Sigmoid colon (tissue), 7 donors: ENCODE measurements at regions of chr14 and their contacts with region 1.

Region 1: DNA sequence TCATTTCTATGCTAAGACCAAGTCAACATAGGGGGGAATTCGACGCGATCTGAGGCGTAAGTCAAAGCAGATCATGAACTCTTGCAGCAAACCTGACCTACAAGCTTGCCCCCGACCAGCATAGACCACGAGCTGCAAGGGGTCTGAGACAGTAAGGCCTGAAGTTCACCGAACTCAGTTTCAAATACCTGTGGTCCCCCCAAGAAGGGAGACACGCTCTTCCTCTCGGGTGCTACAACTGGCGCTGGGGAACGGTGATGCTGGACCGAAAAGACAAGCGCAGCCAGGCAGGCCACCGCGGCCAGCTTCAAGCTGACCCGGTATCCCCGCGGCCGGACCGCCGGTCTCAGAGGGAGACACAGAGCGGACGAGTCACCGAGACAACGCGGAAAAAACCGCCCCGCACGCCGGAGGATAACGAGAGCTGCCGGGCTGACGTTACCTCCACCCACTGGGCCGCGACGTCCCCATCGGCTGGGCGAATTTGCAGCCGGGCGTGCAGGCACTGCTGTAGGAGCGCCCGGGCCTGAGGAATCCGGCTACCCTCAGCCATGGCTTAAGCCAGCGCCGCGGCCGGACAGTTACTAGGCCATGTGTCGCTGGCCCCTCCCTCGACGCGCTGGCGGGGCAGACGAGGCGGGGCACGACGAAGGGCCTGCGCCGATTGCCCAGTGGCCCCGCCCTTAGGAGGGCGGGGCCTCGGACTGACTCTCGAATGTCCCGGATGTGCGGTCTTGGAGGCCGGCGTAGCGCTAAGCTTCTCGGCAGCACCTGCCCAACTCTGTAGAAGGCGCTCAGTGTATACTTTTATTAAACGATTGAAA is at the start of gene DTD2:
- DNase-seq: peak; percentile 97
- H3K4me3 ChIP-seq: peak within 1 kb of the TSS; percentile 68 to 80 (median 74)
- H3K27ac ChIP-seq: peak within 1 kb of the TSS; percentile 88 to 95 (median 94)
- H3K4me1 ChIP-seq: peaks cover 0 to 32% (median 16%) of the 10 kb centered on the region in 4 donors
- H3K27me3 ChIP-seq: no peaks in the 10 kb centered on the region
- CTCF ChIP-seq: no peak
- EP300 ChIP-seq: no peak
- POLR2A ChIP-seq: peak; percentile 51 to 63
- total RNA-seq, gene DTD2: 26.0 to 31.6 (median 27.6) TPM

Region 2: DNA sequence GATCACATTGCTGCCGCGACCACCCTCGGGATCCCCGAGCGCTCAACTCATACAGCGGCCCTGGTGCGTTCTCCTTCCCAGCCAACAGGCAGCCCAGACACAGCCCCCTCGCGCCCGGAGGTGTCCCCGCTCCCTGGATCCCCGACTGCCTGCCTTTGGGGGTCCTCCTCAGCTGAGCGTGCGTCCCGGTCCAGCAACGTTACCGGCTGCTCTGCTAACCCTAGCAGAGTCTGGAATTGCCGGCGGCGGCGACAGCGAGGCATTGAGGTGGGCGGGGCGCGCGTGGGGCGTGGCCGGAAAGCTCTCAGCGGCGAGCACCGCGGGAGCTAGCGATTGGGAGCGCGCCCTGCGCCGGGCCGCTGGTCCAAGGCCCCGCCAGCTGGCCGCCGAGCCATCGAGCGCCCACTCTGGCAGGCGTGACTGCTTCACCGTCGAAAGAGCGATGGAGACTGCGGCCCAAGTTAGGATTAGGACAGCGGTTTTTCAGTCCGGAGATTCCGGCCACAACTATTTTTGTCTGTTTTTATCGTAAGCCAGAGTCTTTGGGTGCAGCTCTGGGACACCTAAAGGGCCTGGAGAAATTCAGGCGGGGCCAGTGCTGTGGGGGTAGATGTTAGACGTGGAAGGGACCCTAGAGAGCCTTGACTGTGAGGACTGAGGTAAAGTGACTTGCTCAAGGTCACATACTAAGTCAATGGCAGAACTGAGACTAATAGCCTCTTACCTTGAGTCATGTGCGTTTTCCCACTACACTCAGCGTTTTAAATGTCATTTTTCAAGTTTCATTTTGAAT is 36.5 kb before region 1 on chr14 and contains the start of gene HEATR5A:
- intact Hi-C with region 1: loop called (anchors 2 kb)
- DNase-seq: peak; percentile 97
- H3K4me3 ChIP-seq: peak within 1 kb of the TSS; percentile 86 to 100 (median 92)
- H3K27ac ChIP-seq: peak within 1 kb of the TSS; percentile 90 to 95 (median 92)
- H3K4me1 ChIP-seq: peaks cover 0 to 36% (median 22%) of the 10 kb centered on the region in 4 donors
- H3K27me3 ChIP-seq: no peaks in the 10 kb centered on the region
- CTCF ChIP-seq: peak in 1 of 4 experiments; percentile 19
- EP300 ChIP-seq: no peak
- POLR2A ChIP-seq: peak; percentile 92 to 97
- total RNA-seq, gene HEATR5A: 27.6 to 41.9 (median 36.0) TPM

Region 3: DNA sequence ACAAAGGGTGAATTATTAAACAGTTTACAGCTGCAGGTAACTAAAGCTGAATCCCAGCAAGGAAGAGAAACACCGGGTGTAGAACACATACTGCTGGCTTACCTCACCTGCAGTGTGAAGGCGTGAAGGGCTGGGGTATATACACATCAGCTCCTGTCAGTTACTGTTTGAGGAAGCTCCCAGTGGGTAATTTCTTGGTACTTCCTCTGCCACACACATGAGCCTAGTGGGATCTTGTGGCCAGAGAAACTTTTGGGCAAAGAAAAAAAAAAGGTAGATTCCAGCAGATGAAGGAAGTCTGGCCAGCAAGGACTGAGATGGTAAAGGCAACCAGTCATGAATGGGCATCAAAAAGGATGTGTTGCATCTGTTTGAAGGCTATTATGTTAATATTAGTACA is 44.8 kb after region 1 on chr14:
- intact Hi-C with region 1: no loop called
- DNase-seq: no peak
- H3K4me3 ChIP-seq: no peak overlapping the region
- H3K27ac ChIP-seq: no peak overlapping the region
- H3K4me1 ChIP-seq: peaks cover 0 to 24% (median 18%) of the 10 kb centered on the region in 4 donors
- H3K27me3 ChIP-seq: no peaks in the 10 kb centered on the region
- CTCF ChIP-seq: no peak
- EP300 ChIP-seq: no peak
- POLR2A ChIP-seq: no peak